ENCODE measurements at regions of chr15 and their contacts with region 1.

Region 1: DNA sequence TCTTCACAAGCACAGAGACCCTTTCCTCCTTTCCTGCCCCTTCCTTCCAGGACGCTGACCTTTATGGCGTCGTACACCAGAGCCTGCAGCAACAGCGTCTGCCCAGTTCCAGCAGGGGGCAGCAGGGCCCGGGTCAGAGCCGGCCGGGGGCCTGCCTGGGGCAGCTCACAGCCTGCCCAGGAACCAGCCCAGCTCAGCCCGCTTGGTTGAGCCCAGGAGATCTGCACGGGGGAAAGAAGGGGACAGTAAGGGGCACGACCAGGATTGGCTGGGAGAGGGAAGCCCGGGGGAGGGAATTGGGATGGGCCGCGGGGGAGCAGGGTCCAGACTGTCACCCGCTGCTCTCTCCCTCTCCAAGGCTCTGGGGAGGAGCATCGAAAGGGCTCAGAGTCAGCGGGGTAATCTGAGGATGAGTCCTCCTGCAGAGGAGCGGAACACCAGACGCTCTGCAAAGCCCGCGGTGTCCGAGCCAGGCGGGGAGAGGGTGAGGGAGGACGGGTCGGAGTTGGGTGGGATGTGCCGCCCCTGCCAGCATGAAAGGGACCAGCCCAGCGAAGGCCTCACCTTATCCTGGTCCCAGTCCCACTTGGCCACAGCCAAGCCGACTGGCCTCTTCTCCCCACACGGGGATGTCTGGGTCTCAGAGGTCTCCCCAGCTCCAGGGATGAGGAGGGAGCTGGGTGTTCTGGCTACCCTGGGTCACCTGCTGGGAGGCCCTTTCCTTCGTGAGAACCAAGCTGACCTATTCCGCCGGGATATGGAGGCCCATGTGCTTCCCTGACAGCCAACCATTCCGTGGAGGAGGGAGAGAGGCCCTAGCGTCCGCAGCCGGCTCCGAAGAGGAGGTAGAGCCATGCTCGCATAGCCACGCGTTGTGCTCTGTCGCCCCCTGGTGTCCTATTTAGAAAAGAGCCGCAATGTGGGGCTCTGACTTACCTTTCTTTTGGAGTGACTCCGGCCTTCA is 7.4 kb upstream of the IGDCC3 start:
- DNase-seq: peak; percentile 96

Region 2: DNA sequence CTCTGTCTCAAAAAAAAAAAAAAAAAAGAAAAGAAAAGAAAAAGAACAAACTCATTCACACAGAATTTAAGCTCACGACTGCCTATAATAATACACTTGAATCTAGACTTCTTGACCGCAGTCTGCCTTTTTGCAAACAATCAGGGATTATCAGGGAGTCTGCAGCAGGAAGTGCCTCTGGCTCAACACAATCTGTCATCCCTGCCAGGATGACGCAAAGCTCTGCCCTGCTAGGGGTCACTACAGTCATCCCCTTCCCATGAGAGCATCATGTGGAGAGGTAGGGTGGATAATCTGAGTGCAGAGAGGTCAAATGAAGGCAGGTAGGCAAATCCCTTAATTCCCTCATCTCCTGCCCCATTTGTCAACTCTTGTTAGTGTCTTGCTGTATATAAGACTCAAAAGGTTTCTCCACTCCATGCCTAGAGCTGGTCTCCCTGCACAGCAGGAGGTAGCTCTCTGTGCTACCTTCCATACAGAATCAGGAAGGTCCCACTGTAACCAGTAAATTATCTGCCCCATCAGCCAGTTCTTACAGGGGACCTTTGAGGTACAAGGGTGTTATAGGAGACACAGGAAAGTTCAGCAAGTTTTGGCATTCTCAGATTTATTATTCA is 274.4 kb before region 1 on chr15:
- in situ Hi-C with region 1: no loop called
- DNase-seq: no peak

Region 3: GRCh38 chr15:65323071-65323511 is 62.1 kb before region 1 on chr15:
- in situ Hi-C with region 1: loop called (anchors 5 kb)
- DNase-seq: peak; percentile 57

Measured in KBM-7 (cell line).